ENCODE measurements at regions of chr17 and their contacts with region 1.

Region 1: DNA sequence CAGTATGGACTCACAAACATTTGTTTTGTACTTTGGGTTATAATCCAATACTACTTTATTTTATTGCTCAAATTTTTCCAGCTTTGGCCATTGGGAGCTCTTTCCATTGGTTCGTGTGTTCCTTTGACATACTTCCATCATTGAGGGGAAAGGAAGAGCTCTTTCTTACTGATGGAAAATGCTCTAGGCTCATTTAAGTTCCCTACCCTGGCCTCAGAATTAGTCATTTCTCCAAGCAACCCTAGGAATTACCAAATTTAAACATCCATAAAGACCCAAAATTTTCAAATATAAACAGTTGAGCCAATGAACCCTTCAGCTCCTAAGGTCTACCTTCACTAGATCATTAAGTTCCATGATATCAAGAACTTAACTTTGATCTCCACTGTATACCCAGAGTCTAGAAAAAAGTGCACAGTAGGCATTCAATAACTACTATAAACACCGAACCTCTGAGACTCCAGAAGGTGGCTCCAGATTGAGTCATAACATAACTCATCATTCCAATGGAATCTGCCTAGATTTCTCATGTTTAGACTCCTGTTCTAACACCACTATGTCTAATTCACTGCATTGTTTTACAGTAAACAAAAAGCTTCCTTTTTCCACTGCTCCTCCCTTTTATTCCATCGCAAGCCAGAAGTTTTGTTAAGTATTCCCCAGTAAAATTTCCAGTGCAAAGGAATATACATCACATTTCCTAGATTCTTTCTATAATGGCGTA is 39.0 kb downstream of the SMURF2 start:
- DNase-seq: peak; percentile 80
- ATAC-seq: peak; percentile 84
- H3K4me3 ChIP-seq: peak overlapping the region in 1 of 2 experiments; percentile 6; a peak in 2 of 4 replicates
- H3K27ac ChIP-seq: peak overlapping the region; percentile 48; the same call in 1 of the 2 replicates
- H3K4me1 ChIP-seq: peaks cover 33 to 60% of the 10 kb centered on the region in 2 experiments
- H3K27me3 ChIP-seq: no peaks in the 10 kb centered on the region
- CTCF ChIP-seq: 0 out of 6 replicates have a peak, but pooled peaks of 1 of the 3 experiments have one; percentile 6
- POLR2A ChIP-seq: no peak
- RAD21 ChIP-seq: peak; percentile 32

Region 2: GRCh38 chr17:64016231-64016784 is 606.8 kb before region 1 on chr17:
- CTCF ChIA-PET with region 1: no interaction called
- POLR2A ChIA-PET with region 1: no interaction called
- RAD21 ChIA-PET with region 1: no interaction called
- intact Hi-C with region 1: loop called (anchors 10 kb)
- DNase-seq: no peak
- ATAC-seq: peak; percentile 80
- H3K4me3 ChIP-seq: no peak overlapping the region
- H3K27ac ChIP-seq: no peak overlapping the region
- H3K4me1 ChIP-seq: no peaks in the 10 kb centered on the region
- H3K27me3 ChIP-seq: no peaks in the 10 kb centered on the region
- CTCF ChIP-seq: peak; percentile 16 to 39 (median 34); a peak in 4 of 6 replicates
- POLR2A ChIP-seq: no peak
- RAD21 ChIP-seq: peak; percentile 56

Region 3: GRCh38 chr17:64653325-64653984 is 30.4 kb after region 1 on chr17:
- CTCF ChIA-PET with region 1: interaction called, 11 read pairs
- POLR2A ChIA-PET with region 1: interaction called, 4 read pairs
- RAD21 ChIA-PET with region 1: no interaction called
- intact Hi-C with region 1: no loop called
- DNase-seq: no peak
- ATAC-seq: no peak
- H3K4me3 ChIP-seq: no peak overlapping the region
- H3K27ac ChIP-seq: peak overlapping the region; percentile 17; the same call in 1 of the 2 replicates
- H3K4me1 ChIP-seq: peaks cover 80 to 96% of the 10 kb centered on the region in 2 experiments
- H3K27me3 ChIP-seq: no peaks in the 10 kb centered on the region
- CTCF ChIP-seq: no peak
- POLR2A ChIP-seq: no peak
- RAD21 ChIP-seq: no peak

Measured in HCT116 (cell line).